Activated CD4-positive, alpha-beta T cell treated with anti-CD3 and anti-CD28 coated beads for 36 hours (primary cell): ENCODE measurements at regions of chr1 and their contacts with region 1.

Region 1: DNA sequence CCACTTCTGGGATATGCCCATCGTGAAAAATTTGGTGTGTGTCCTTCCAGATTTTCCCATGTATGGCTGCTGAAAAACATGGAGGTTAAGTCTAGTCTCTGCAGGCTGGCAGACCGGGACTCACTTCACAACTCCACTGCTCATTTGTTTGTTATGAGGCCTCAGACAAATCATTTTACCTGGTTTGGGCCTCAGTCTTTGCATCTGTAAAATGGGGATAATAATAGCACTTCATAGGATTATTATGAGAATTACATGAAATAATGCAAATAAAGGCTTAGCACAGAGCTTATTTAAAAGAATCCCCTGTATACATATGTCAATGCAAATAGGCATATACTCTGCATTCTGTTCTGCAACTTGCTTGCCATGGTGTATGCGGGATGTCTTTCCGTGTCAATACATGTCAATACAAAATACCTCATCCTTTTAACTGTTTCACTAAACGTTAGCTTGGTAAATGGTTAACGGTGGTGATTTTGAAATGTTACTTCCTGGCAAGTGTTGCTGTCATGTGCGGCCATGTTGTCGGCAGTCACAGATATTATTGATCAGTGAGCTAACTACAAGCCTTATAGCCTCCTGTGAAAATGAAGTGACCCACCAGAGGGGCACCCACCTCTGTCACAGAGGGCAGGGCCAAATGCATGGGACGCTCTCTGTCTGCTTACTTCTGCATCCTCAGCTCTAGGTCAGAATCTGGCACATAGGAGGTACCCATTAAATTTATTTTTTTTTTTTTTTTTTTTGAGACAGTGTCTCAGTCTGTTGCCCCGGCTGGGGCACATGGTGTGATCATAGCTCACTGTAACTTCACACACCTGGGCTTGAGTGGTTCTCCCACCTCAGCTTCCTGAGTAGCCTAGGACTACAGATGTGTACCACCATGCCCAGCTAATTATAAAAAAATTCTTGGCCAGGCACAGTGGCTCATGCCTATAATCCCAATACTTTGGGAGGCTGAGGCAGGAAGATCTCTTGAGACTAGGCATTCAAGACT is 4.3 kb downstream of the LCK start:
- DNase-seq: peak; percentile 55
- ATAC-seq: peak; percentile 6
- H3K4me3 Mint-ChIP-seq: peak overlapping the region; percentile 91
- H3K27ac Mint-ChIP-seq: peak overlapping the region; percentile 87
- H3K4me1 Mint-ChIP-seq: peaks cover 48% of the 10 kb centered on the region
- H3K27me3 Mint-ChIP-seq: no peaks in the 10 kb centered on the region

Region 2: GRCh38 chr1:32266921-32267591 is 11.7 kb after region 1 on chr1:
- CTCF ChIA-PET with region 1: interaction called, 4 read pairs
- POLR2A ChIA-PET with region 1: interaction called, 6 read pairs
- intact Hi-C with region 1: loop called in 1 of 2 experiments (anchors 1 kb)
- DNase-seq: peak; percentile 49
- ATAC-seq: peak; percentile 40
- H3K4me3 Mint-ChIP-seq: peak overlapping the region; percentile 36
- H3K27ac Mint-ChIP-seq: peak overlapping the region; percentile 97
- H3K4me1 Mint-ChIP-seq: peaks cover 60% of the 10 kb centered on the region
- H3K27me3 Mint-ChIP-seq: no peaks in the 10 kb centered on the region

Region 3: GRCh38 chr1:32273388-32274208 is 18.2 kb after region 1 on chr1:
- CTCF ChIA-PET with region 1: interaction called, 4 read pairs
- POLR2A ChIA-PET with region 1: no interaction called
- intact Hi-C with region 1: loop called (anchors 1 kb)
- DNase-seq: peak; percentile 91
- ATAC-seq: peak; percentile 93
- H3K4me3 Mint-ChIP-seq: peak overlapping the region; percentile 62
- H3K27ac Mint-ChIP-seq: peak overlapping the region; percentile 94
- H3K4me1 Mint-ChIP-seq: peaks cover 58% of the 10 kb centered on the region
- H3K27me3 Mint-ChIP-seq: no peaks in the 10 kb centered on the region